AG04449 (cell line): ENCODE measurements at regions of chr1 and their contacts with region 1.

Region 1: GRCh38 chr1:156892190-156893047 is 1.1 kb upstream of the PEAR1 start:
- DNase-seq: no peak
- H3K4me3 ChIP-seq: peak overlapping the region; percentile 30
- CTCF ChIP-seq: peak; percentile 97

Region 2: GRCh38 chr1:156414461-156415064 is 477.9 kb before region 1 on chr1:
- CTCF ChIA-PET with region 1: no interaction called
- POLR2A ChIA-PET with region 1: no interaction called
- DNase-seq: no peak
- H3K4me3 ChIP-seq: no peak overlapping the region
- CTCF ChIP-seq: no peak

Region 3: DNA sequence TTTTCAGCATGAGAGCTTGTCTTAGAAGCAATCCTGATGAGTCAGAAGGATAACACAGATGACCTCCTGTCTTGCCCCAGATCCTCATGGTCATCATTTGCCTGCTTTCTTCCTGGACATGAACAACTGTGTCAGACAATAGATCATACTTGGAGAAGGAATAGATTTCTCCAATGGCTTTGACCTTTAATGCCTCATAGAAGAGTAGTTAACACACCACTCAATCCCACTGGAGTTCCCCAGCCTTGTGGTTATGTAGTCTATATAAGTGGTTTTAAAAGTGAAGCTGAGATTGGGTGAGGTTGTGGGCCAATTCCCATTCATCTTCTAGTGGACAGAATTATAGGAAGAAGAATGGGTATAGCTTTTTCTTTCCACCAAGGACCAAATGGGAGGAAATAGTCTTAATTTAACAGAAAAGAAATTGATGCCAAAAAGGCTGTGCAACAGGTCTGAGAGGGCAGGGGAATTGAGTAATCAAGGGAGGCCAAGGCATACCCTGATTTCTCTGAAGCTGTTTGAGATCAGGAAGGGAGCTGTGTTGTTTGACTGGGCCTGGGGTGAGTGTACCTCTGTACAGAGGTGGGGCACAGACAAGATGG is 110.7 kb before region 1 on chr1:
- CTCF ChIA-PET with region 1: interaction called, 21 read pairs
- POLR2A ChIA-PET with region 1: no interaction called
- DNase-seq: no peak
- H3K4me3 ChIP-seq: no peak overlapping the region
- CTCF ChIP-seq: no peak

Region 4: GRCh38 chr1:156804572-156805243 is 87.7 kb before region 1 on chr1:
- CTCF ChIA-PET with region 1: interaction called, 333 read pairs
- POLR2A ChIA-PET with region 1: no interaction called
- DNase-seq: no peak
- H3K4me3 ChIP-seq: no peak overlapping the region
- CTCF ChIP-seq: no peak

Region 5: DNA sequence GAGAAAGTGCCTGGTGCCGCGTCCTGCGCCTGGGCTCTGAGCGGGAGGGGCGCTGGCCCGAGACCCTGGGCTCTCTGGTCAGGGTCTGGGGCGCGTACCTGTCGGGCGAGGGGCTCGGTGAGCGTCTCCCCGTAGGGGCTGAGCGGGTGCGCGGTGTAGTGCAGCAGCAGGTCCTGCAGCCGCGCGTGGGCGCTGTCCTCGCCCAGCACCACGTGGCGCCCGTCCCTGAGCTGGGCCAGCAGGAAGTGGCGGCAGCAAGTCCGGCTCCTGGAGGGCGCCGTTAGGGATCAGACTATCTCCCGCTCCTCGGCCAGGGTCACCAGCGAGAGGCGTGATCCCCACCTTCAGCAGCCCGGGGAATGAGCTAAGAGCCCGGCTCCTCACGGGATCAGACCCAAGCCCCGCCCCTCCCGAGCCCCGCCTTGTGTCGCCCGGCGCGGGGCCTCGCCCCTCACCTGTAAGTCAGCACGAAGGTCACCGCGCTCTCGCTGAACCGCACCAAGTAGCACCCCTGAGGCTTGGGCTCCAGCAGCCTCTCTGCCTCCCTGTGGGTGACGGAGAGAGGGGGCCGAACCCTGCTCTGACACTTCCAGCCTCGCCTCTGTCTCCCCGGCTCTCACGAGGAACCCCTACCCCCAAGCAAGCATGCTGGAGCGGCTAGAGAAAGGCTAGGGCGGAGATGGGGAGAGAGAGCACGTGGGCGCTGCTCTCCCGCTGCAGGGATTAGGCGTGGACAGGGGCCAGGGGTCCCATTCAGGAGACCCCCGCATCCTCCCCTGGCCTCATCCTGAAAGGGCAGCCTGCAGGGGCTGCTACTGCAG is 78.5 kb before region 1 on chr1:
- CTCF ChIA-PET with region 1: interaction called, 28 read pairs
- POLR2A ChIA-PET with region 1: no interaction called
- DNase-seq: no peak
- H3K4me3 ChIP-seq: peak overlapping the region; percentile 33
- CTCF ChIP-seq: peak; percentile 80

Region 6: GRCh38 chr1:156876281-156876680 is 16.1 kb before region 1 on chr1:
- CTCF ChIA-PET with region 1: interaction called, 204 read pairs
- POLR2A ChIA-PET with region 1: no interaction called
- DNase-seq: no peak
- H3K4me3 ChIP-seq: no peak overlapping the region
- CTCF ChIP-seq: peak; percentile 21

Region 7: DNA sequence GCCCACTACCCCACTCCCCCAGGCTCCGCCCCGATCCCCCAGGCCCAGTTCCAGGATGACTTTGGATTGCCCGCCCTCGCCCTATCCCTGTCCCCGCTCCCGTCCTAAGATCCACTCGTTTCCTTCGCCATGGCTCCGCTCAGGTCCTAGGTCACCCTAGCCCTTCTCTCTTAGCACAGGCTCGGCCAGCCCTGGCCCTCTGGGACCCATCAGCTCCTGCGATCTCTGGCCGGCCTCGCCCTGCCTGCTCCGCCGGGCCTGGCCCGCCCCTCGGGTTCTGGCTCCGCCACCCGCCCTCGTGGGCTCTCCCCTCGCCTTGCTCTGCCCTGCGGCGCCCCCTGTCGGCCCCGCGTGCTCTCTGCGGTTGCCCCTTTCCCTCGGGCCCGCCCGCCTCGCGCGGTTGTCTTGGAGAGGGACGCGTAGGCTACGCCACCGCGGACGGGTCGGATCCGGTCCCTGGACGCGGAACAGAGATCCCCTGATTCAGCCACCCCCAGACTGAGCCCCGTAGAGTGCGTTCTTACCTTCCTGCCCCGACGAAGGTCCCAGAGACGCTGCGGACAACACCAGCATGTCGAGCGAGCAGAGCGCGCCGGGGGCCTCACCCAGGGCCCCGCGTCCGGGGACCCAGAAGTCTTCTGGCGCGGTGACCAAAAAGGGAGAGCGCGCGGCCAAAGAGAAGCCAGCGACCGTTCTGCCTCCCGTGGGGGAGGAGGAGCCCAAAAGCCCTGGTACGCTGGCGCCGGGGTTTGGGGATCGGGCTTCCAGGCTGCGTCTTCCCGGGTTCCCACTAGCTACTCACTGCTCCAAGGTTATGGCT is 28.0 kb after region 1 on chr1 and contains the start of gene LRRC71:
- CTCF ChIA-PET with region 1: interaction called, 678 read pairs
- POLR2A ChIA-PET with region 1: interaction called, 4 read pairs
- DNase-seq: no peak
- H3K4me3 ChIP-seq: peak within 1 kb of the TSS; percentile 30; the same call in 1 of the 2 replicates
- CTCF ChIP-seq: peak; percentile 98

Region 8: DNA sequence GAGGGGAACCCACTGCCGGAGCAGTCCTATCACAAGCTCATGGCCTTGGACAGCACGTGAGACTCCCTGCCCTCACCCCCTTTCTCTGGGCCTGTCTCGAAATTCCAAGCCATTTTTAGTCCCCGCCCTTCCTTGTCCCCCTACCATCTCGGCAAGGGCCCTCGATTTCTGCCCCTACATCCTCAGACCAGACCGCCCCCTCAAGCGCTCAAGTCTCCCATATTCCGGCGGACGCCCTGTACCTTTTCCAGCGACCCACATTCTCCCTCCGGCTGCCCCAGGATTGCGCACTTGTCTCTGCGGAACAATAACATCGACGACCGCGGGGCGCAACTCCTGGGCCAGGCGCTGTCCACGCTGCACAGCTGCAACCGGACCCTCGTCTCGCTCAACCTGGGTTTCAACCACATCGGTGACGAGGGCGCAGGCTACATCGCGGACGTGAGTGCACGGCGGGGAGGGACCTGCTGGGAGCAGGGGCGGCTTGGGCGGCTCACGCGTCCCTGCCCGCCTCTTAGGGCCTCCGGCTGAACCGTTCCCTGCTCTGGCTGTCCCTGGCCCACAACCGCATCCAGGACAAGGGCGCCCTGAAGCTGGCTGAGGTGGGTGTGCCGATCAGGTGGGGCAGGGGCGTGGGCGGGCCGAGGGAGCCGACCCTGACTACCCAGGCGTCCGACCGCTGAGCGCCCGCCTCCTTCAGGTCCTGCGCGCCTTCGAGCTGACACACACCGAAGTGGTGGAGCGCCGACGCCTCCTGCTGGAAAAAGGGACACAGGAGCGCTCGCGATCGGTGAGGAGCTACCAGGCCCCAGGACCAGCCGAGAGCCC is 35.0 kb after region 1 on chr1:
- CTCF ChIA-PET with region 1: interaction called, 678 read pairs
- POLR2A ChIA-PET with region 1: no interaction called
- DNase-seq: no peak
- H3K4me3 ChIP-seq: peak overlapping the region; percentile 55
- CTCF ChIP-seq: peak; percentile 94

Region 9: GRCh38 chr1:157025856-157026255 is 133.4 kb after region 1 on chr1:
- CTCF ChIA-PET with region 1: no interaction called
- POLR2A ChIA-PET with region 1: no interaction called
- DNase-seq: no peak
- H3K4me3 ChIP-seq: no peak overlapping the region
- CTCF ChIP-seq: no peak